ENCODE measurements at regions of chr11 and their contacts with region 1.

Region 1: GRCh38 chr11:124961972-124962609 is 8.1 kb downstream of the CCDC15 start:
- DNase-seq: no peak
- H3K4me3 ChIP-seq: no peak overlapping the region
- H3K27ac ChIP-seq: no peak overlapping the region
- H3K4me1 ChIP-seq: no peaks in the 10 kb centered on the region
- H3K27me3 ChIP-seq: no peaks in the 10 kb centered on the region
- CTCF ChIP-seq: peak; percentile 42 to 68 (median 48)

Region 2: DNA sequence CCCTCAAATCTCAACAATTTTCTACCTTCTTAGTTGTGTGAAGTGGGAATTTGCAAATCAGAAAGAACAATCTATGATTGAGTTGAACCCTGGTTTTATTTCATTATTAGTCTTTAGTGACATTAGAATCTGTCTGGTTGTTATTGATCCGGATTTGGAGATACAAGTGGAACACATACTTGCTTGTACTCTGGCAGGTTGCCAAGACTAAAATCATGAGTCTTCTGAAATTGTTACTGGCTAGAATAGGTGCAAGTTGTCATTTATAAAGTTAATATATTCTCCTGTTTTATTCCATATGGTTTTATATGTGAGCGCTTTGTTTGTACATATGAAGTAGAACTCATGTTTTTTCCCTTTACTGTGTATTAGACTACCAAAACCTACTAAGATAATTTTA is 14.9 kb after region 1 on chr11:
- intact Hi-C with region 1: no loop called
- DNase-seq: no peak
- H3K4me3 ChIP-seq: no peak overlapping the region
- H3K27ac ChIP-seq: no peak overlapping the region
- H3K4me1 ChIP-seq: no peaks in the 10 kb centered on the region
- H3K27me3 ChIP-seq: no peaks in the 10 kb centered on the region
- CTCF ChIP-seq: no peak

Region 3: DNA sequence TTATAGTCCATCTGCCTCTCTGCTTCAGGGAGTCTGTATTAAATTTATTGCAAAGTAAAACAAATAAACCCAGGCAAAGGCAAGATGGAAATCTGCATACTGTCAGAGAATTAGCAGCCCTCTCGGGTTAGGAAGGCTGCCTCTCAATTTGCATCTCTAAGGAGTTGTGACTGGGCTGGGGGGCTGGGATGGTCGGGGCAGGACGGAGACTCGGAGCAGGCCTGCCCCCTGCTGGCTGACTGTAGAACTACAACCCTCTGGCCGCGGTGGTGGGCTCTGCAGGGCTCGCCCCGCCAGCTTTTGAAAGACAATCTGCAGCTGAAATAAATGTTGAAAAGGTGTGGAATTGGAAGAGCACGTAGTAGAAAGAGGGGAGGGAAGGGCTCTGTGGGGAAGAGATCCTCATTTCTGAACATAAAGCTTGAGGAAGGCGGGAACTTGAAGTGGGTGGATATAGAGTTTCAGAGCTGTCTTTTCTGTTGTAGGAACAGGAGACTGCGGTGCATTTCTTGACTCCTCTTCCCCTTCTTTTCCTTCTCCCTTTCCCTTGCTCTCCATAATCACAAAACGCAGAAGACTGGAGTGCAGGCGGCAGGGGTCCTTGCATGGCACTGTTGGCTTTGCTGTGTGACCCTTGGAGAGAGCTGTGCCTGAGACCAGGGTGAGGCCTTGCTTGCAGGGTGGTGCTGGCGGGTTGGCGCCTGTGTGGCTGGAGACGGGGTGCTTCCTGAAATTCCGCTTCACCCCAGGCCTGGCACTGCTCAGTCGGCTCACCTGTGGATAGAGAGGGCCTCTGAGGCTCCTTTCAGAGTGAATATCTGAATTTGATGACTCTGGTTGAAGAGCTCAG is 179.8 kb after region 1 on chr11:
- intact Hi-C with region 1: loop called (anchors 2 kb)
- DNase-seq: peak in 1 of 2 donors; percentile 63
- H3K4me3 ChIP-seq: no peak overlapping the region
- H3K27ac ChIP-seq: no peak overlapping the region
- H3K4me1 ChIP-seq: no peaks in the 10 kb centered on the region
- H3K27me3 ChIP-seq: no peaks in the 10 kb centered on the region
- CTCF ChIP-seq: peak; percentile 81 to 96 (median 90)

Measured in ascending aorta (tissue), 2 donors.